Transverse colon (tissue), 4 donors: ENCODE measurements at regions of chr2 and their contacts with region 1.

Region 1: DNA sequence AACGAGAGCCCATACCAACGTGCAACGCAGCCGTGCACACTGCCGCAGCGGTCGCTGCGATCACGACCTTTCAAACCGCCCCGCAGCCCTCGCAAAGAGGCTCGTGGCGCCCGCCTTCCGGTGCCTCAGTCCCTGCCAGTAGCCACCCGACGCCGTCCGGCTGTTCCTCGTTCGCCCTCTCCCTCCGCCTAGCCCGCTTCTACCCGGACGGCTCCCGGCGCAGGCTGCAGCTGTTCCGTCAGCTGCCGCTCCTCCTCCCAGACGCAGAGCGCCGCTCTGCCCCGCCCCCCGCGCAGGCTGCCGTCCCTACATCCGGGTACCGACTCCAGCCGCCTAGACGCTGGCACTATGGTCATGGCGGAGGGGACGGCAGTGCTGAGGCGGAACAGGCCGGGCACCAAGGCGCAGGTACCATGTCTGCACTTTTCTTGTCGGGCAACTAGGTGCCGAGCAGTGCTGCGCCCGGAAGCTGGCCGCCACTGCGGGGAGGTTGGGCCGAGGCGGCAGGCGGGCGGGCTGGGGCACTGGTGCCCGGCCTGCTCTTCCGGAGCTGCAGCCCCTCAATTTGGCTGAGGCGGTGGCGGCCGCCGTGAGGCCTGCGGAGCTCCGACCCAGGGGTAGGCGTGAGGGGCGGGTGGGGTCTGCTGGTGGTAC is at the start of gene MOB4:
- DNase-seq: peak; percentile 96
- H3K4me3 ChIP-seq: peak within 1 kb of the TSS; percentile 73 to 91 (median 80)
- H3K27ac ChIP-seq: peak within 1 kb of the TSS; percentile 93 to 95 (median 94)
- H3K4me1 ChIP-seq: peaks cover 9 to 27% (median 21%) of the 10 kb centered on the region in 4 donors
- H3K27me3 ChIP-seq: no peaks in the 10 kb centered on the region
- CTCF ChIP-seq: peak in 1 of 5 experiments; percentile 19
- EP300 ChIP-seq: no peak
- POLR2A ChIP-seq: peak; percentile 93
- total RNA-seq, gene MOB4: 12.3 to 27.9 (median 25.3) TPM

Region 2: DNA sequence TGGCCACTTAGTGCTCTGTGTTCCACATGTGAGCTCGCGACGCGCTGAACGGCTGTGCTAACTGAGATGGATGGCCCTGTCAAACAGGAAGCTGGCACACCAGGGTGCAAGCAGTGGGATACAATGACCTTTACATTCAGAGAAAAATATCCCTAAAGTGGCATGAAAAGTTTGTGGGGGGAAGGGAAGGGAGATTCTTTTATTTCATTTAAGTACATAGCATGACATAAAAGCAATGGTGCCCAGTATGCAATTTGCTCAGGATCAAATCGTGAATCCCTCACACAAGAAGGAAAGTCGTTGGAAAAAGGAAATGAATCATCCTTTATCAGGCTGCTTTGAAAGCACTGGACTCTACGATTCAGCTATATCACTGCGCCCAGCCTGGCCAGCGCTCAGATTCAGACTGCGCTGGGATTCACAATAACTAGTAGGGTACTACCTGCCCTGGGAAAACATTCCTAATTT is 1915.9 kb after region 1 on chr2:
- in situ Hi-C with region 1: no loop called
- intact Hi-C with region 1: loop called (anchors 10 kb)
- DNase-seq: no peak
- H3K4me3 ChIP-seq: no peak overlapping the region
- H3K27ac ChIP-seq: no peak overlapping the region
- H3K4me1 ChIP-seq: peaks cover 0 to 8% (median under 1%) of the 10 kb centered on the region in 4 donors
- H3K27me3 ChIP-seq: no peaks in the 10 kb centered on the region
- CTCF ChIP-seq: no peak
- EP300 ChIP-seq: no peak
- POLR2A ChIP-seq: no peak